Activated B cell treated with CpG ODN at 0.5 μM for 24 hours (primary cell): ENCODE measurements at regions of chr4 and their contacts with region 1.

Region 1: DNA sequence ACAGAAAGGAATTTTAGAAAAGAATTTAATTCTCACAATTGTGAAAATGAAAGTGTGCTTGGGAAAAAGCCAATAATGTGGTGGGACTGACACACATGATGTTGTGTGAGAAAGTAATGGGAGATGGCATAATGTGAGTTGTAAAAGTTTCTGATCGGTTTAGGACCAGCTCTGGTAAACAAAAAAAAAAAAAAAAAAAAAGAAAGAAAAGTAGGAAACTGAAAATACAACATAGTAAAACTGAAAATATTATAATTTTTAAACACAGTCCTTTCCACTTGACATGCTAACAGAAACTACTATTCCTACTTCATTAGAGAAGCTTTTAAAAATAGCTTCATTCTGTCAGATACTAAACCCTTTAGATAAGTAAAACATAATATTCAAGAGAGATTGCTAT is 28.2 kb downstream of the RAP1GDS1 start:
- DNase-seq: no peak
- ATAC-seq: peak; percentile 25
- H3K4me3 Mint-ChIP-seq: peak overlapping the region; percentile 67
- H3K27ac Mint-ChIP-seq: peak overlapping the region; percentile 71
- H3K4me1 Mint-ChIP-seq: peaks cover 58% of the 10 kb centered on the region
- H3K27me3 Mint-ChIP-seq: no peaks in the 10 kb centered on the region
- CTCF ChIP-seq: no peak

Region 2: DNA sequence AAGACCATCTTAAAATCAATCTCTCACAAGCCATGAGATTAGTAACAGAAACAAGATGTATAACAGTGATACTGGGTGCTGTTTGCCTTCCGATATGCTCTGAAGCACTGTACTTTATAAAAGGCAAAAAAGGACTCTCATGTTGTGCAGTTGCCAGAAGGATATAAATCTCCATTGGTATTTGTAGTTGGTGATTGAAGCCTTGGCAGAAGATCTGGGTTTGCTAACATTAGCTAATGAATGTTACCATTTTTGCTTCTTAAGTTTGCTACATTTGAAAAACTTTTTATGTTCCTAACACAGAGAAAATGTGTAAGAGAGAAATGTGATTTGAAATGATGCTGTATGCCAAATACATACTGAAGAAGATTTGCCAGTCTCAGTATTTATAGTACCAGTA is 16.2 kb after region 1 on chr4:
- CTCF ChIA-PET with region 1: no interaction called
- POLR2A ChIA-PET with region 1: interaction called, 10 read pairs
- intact Hi-C with region 1: no loop called
- DNase-seq: no peak
- ATAC-seq: no peak
- H3K4me3 Mint-ChIP-seq: no peak overlapping the region
- H3K27ac Mint-ChIP-seq: no peak overlapping the region
- H3K4me1 Mint-ChIP-seq: peaks cover 21% of the 10 kb centered on the region
- H3K27me3 Mint-ChIP-seq: no peaks in the 10 kb centered on the region
- CTCF ChIP-seq: no peak